Activated B cell treated with CpG ODN at 0.5 μM for 24 hours (primary cell): ENCODE measurements at regions of chr10 and their contacts with region 1.

Region 1: GRCh38 chr10:17228091-17228940 is at the start of gene VIM:
- DNase-seq: peak; percentile 82
- ATAC-seq: peak; percentile 45
- H3K4me3 Mint-ChIP-seq: peak within 1 kb of the TSS; percentile 97
- H3K27ac Mint-ChIP-seq: peak within 1 kb of the TSS; percentile 99
- H3K4me1 Mint-ChIP-seq: peaks cover 46% of the 10 kb centered on the region
- H3K27me3 Mint-ChIP-seq: no peaks in the 10 kb centered on the region
- CTCF ChIP-seq: no peak
- total RNA-seq, gene VIM: 796 and 798 TPM in 2 replicates

Region 2: GRCh38 chr10:16843252-16843870 is 385.0 kb before region 1 on chr10:
- CTCF ChIA-PET with region 1: interaction called, 3 read pairs
- POLR2A ChIA-PET with region 1: no interaction called
- intact Hi-C with region 1: loop called (anchors 1 kb)
- DNase-seq: no peak
- ATAC-seq: peak; percentile 37
- H3K4me3 Mint-ChIP-seq: no peak overlapping the region
- H3K27ac Mint-ChIP-seq: no peak overlapping the region
- H3K4me1 Mint-ChIP-seq: no peaks in the 10 kb centered on the region
- H3K27me3 Mint-ChIP-seq: no peaks in the 10 kb centered on the region
- CTCF ChIP-seq: peak; percentile 35

Region 3: DNA sequence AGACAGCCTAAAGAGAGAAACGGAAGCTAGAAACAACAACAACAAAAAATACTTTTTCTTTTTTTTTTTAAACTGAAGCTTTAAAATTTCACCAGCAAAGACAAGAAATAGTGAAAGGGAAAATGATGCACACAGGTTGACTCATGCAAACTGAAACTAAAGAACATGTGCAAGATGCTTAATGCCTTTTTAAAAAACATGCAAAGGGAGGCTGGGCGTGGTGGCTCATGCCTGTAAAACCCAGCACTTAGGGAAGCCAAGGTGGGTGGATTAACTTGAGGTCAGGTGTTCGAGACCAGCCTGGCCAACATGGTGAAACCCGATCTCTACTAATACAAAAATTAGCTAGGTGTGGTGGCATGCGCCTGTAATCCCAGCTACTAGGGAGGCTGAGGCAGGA is 83.6 kb before region 1 on chr10:
- CTCF ChIA-PET with region 1: no interaction called
- POLR2A ChIA-PET with region 1: interaction called, 3 read pairs
- intact Hi-C with region 1: loop called (anchors 5 kb)
- DNase-seq: no peak
- ATAC-seq: no peak
- H3K4me3 Mint-ChIP-seq: no peak overlapping the region
- H3K27ac Mint-ChIP-seq: no peak overlapping the region
- H3K4me1 Mint-ChIP-seq: no peaks in the 10 kb centered on the region
- H3K27me3 Mint-ChIP-seq: peaks cover 2% of the 10 kb centered on the region
- CTCF ChIP-seq: no peak

Region 4: DNA sequence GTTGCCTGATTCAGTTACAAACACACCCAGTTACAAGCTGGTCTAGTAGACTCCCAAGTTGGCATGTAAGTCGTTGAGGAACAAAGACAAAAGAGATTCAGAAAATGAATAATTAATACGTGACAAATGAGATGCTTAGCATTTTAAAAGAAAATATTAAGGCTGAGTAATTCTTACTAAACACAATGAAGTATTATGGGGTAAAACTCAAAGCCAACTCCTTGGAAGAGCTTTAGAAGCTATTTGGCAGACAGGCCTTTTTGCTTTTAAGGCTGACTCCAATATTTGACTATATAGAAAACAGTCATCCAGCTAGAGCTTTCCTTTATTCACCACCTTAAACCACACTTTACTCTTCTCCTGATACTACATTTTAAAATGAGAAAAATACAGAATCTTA is 32.3 kb before region 1 on chr10:
- CTCF ChIA-PET with region 1: interaction called, 35 read pairs
- POLR2A ChIA-PET with region 1: interaction called, 251 read pairs
- intact Hi-C with region 1: loop called (anchors 1 kb)
- DNase-seq: no peak
- ATAC-seq: no peak
- H3K4me3 Mint-ChIP-seq: no peak overlapping the region
- H3K27ac Mint-ChIP-seq: no peak overlapping the region
- H3K4me1 Mint-ChIP-seq: peaks cover 23% of the 10 kb centered on the region
- H3K27me3 Mint-ChIP-seq: no peaks in the 10 kb centered on the region
- CTCF ChIP-seq: no peak

Region 5: DNA sequence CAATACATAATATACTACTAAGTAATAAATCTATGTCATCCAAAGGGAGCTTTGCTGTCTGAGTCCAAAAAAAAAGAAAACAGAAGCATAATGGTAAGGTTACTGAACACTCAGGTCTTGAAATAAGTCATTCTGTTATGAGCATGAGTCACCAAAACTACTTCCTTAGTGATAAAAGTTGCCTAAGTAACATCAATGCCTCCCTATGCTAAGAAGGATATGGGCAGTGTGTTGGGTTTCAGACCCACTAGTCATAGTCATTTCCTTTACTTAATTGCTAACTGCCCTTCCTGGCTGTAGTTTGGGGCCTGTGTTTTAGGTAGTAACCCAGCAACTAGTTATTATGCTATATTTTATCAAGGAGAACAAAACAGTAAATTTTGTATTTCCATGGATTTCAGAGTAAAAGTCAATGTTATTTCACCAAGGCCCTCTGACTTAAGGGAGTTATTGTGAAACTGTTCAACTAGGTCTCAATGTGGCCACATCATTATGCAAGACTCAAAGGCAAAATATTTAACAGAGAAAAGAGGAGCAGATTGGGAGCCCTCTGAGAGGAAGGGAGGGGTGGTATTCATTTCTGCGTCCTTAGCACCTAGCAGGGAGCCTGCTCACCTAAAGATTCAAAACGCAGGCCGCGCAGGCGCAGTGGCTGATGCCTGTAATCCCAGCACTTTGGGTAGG is 12.0 kb before region 1 on chr10:
- CTCF ChIA-PET with region 1: interaction called, 7 read pairs
- POLR2A ChIA-PET with region 1: interaction called, 59 read pairs
- intact Hi-C with region 1: loop called (anchors 1 kb)
- DNase-seq: no peak
- ATAC-seq: peak; percentile 96
- H3K4me3 Mint-ChIP-seq: peak overlapping the region; percentile 46
- H3K27ac Mint-ChIP-seq: peak overlapping the region; percentile 90
- H3K4me1 Mint-ChIP-seq: peaks cover 24% of the 10 kb centered on the region
- H3K27me3 Mint-ChIP-seq: no peaks in the 10 kb centered on the region
- CTCF ChIP-seq: no peak

Region 6: GRCh38 chr10:18659120-18659818 is 1431.0 kb after region 1 on chr10 and contains the start of gene ARL5B:
- CTCF ChIA-PET with region 1: no interaction called
- POLR2A ChIA-PET with region 1: interaction called, 3 read pairs
- intact Hi-C with region 1: loop called (anchors 1 kb)
- DNase-seq: peak; percentile 94
- ATAC-seq: peak; percentile 97
- H3K4me3 Mint-ChIP-seq: peak within 1 kb of the TSS; percentile 98
- H3K27ac Mint-ChIP-seq: peak within 1 kb of the TSS; percentile 97
- H3K4me1 Mint-ChIP-seq: peaks cover 41% of the 10 kb centered on the region
- H3K27me3 Mint-ChIP-seq: no peaks in the 10 kb centered on the region
- CTCF ChIP-seq: no peak
- total RNA-seq, gene ARL5B: 9.4 and 10.6 TPM in 2 replicates